ENCODE measurements at regions of chr1 and their contacts with region 1.

Region 1: DNA sequence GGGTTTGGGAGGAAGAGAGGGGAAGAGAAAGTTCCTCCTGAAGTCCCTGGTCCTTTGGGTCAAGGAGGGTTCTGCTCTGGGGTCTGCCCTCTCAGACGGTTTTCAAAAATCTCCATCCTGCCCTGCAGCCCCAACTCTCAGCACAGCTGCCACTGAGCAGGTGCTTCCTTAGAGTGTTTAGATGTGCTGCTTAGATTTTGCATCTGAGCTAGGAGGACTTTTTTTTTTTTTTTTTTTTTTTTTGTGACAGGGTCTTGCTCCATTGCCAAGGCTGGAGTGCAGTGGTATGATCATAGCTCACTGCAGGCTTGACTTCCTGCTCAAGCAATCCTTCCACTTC is 324.9 kb upstream of the POU3F1 start:
- DNase-seq: no peak
- H3K4me3 ChIP-seq: peak overlapping the region in 1 of 4 experiments; percentile 19; a peak in 1 of 8 replicates
- H3K27ac ChIP-seq: no peak overlapping the region
- H3K4me1 ChIP-seq: peaks cover 0 to 11% (median 4%) of the 10 kb centered on the region in 4 experiments; a peak in 2 of 7 replicates
- H3K27me3 ChIP-seq: no peaks in the 10 kb centered on the region
- CTCF ChIP-seq: no peak
- EP300 ChIP-seq: no peak
- POLR2A ChIP-seq: no peak
- RAD21 ChIP-seq: no peak

Region 2: GRCh38 chr1:38360807-38361206 is 10.7 kb before region 1 on chr1:
- CTCF ChIA-PET with region 1: interaction called, 11 read pairs
- POLR2A ChIA-PET with region 1: interaction called, 4 read pairs
- DNase-seq: no peak
- H3K4me3 ChIP-seq: no peak overlapping the region
- H3K27ac ChIP-seq: no peak overlapping the region
- H3K4me1 ChIP-seq: peaks cover 0 to 6% (median 3%) of the 10 kb centered on the region in 4 experiments; a peak in 3 of 7 replicates
- H3K27me3 ChIP-seq: no peaks in the 10 kb centered on the region
- CTCF ChIP-seq: peak; percentile 39 to 55 (median 54)
- EP300 ChIP-seq: no peak
- POLR2A ChIP-seq: no peak
- RAD21 ChIP-seq: peak; percentile 63 to 84

Region 3: GRCh38 chr1:38608202-38608864 is 236.9 kb after region 1 on chr1:
- CTCF ChIA-PET with region 1: no interaction called
- POLR2A ChIA-PET with region 1: no interaction called
- DNase-seq: peak; percentile 49 to 85
- H3K4me3 ChIP-seq: no peak overlapping the region; a peak in 1 of 8 replicates
- H3K27ac ChIP-seq: no peak overlapping the region
- H3K4me1 ChIP-seq: peaks cover 0 to 4% (median 2%) of the 10 kb centered on the region in 4 experiments; a peak in 4 of 7 replicates
- H3K27me3 ChIP-seq: peaks cover 2 to 10% (median 5%) of the 10 kb centered on the region in 4 experiments; a peak in 5 of 7 replicates
- CTCF ChIP-seq: peak; percentile 92 to 95 (median 95)
- EP300 ChIP-seq: no peak
- POLR2A ChIP-seq: no peak
- RAD21 ChIP-seq: peak; percentile 87 to 91

Measured in H1 (cell line).